GM12878 (cell line): ENCODE measurements at regions of chr4 and their contacts with region 1.

Region 1: DNA sequence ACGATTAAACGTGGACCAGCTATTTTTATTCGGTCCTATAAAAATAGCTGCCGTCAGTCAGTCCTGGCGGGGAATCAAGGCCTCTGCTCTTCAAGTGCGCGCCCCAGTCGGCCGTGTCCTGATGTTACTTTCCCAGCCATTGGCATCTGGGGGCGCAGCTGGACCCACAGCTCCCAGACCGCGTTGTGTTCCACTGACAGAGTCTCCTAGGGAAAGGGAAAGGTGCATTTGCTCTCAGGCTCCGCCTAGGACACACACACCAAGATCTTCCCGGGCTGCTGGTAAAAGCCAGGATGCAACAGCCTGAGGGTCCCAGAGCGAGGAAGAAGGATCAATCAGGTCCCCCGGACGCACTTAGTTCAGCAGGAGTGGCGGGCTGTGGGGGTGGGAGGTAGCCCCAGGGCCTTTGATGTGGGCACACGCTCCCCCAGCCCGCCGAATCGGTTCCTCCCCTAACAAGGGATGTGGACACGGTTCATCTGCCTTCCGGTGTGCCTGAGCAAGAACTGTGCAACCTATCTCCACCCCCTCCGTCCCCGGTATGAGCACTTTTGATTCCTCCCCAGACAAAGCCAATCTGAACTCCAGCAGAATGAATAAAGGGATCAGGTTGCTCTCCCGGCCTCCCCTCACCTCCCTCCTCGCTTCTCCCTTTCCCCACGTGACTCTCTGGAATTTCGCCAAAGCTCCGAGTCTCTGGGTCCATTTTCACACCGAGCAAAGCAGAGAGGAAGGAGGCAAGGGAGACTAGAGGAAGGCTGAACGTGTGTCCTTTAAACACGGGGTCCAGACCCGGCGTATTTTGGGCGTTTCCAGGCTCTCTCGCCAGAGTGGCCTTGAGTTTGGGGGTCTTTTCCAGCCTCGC is 626 bp upstream of the FRAS1 start:
- DNase-seq: no peak
- ATAC-seq: peak; percentile 82
- H3K4me3 ChIP-seq: peak overlapping the region; percentile 63
- H3K27ac ChIP-seq: no peak overlapping the region
- H3K4me1 ChIP-seq: peaks cover 12% of the 10 kb centered on the region; the same call in 1 of the 2 replicates
- H3K27me3 ChIP-seq: peaks cover 0 to 35% of the 10 kb centered on the region in 2 experiments; a peak in 3 of 4 replicates
- CTCF ChIP-seq: no peak
- EP300 ChIP-seq: no peak
- POLR2A ChIP-seq: no peak
- RAD21 ChIP-seq: no peak

Region 2: GRCh38 chr4:77327151-77327550 is 729.3 kb before region 1 on chr4:
- CTCF ChIA-PET with region 1: no interaction called
- POLR2A ChIA-PET with region 1: no interaction called
- RAD21 ChIA-PET with region 1: no interaction called
- SMC1A ChIA-PET with region 1: no interaction called
- in situ Hi-C with region 1: no loop called
- intact Hi-C with region 1: no loop called
- DNase-seq: no peak
- ATAC-seq: no peak
- H3K4me3 ChIP-seq: no peak overlapping the region
- H3K27ac ChIP-seq: no peak overlapping the region
- H3K4me1 ChIP-seq: no peaks in the 10 kb centered on the region
- H3K27me3 ChIP-seq: no peaks in the 10 kb centered on the region
- CTCF ChIP-seq: no peak
- EP300 ChIP-seq: no peak
- POLR2A ChIP-seq: no peak
- RAD21 ChIP-seq: no peak

Region 3: DNA sequence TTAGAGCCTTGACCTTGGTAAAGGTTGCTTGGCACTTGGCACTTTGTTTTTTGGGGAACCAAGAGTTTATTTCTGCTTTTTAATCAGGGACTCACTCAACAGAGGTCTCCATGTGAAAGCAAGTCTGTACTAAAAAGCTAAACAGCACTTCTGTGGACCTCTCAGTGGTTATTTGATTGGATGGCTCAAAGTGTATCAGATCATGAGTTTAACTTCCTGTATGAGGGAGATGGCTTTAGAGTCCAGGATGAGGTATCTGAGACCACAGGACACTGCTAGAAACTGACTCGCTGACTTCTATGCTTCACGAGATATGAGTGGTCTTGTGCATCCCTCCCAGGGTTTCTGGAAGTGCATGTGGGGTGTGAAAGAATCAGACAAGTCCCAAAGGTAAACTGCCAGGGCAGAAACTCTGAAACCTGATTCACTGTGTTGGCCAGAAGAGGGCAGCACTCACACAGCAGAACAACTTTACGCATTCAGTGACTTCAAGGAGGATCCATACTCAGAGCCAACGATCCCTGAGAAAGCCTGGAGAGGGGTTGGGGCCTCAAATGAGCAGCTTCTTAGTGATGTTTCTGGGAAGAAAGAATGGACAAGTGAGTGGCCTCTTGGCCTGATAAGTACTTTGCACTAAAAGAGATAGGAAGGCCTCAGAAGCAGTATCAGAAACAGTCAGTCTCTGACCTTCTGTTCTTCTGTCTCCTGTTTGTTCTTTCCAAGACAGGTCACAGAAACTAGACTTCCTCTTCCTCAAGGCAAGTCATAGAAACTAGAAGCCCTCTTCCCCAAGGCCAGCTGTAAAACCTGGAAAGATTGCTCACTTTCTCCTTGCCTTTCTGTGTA is 671.1 kb before region 1 on chr4:
- CTCF ChIA-PET with region 1: no interaction called
- POLR2A ChIA-PET with region 1: no interaction called
- RAD21 ChIA-PET with region 1: no interaction called
- SMC1A ChIA-PET with region 1: no interaction called
- in situ Hi-C with region 1: no loop called
- intact Hi-C with region 1: no loop called
- DNase-seq: peak; percentile 15
- ATAC-seq: peak; percentile 93
- H3K4me3 ChIP-seq: no peak overlapping the region
- H3K27ac ChIP-seq: no peak overlapping the region
- H3K4me1 ChIP-seq: no peaks in the 10 kb centered on the region
- H3K27me3 ChIP-seq: no peaks in the 10 kb centered on the region
- CTCF ChIP-seq: peak; percentile 84 to 85 (median 84)
- EP300 ChIP-seq: no peak
- POLR2A ChIP-seq: no peak
- RAD21 ChIP-seq: peak; percentile 89

Region 4: DNA sequence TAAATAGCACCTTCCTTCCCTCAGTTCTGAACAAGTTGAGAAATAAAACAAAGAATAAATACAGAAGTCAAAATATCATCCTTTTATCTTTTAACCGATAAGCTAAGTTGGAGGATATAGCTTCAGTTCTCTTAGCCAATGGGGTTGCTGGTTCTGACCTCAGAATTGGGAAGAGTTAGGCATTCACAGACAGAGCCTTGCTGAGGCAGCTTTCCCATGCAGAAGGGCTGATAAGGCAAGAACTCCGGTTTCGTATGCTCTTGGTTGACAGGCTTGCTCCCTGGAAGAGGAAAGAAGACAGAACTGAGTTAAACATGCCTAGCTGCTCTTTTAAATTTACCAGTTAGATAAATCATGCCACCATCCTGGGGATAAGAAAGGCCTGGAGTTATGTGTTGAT is 18.3 kb after region 1 on chr4:
- CTCF ChIA-PET with region 1: interaction called, 16 read pairs
- POLR2A ChIA-PET with region 1: interaction called, 5 read pairs
- RAD21 ChIA-PET with region 1: interaction called, 11 read pairs
- SMC1A ChIA-PET with region 1: interaction called, 3 read pairs
- in situ Hi-C with region 1: no loop called
- intact Hi-C with region 1: no loop called
- DNase-seq: no peak
- ATAC-seq: no peak
- H3K4me3 ChIP-seq: no peak overlapping the region
- H3K27ac ChIP-seq: no peak overlapping the region
- H3K4me1 ChIP-seq: no peaks in the 10 kb centered on the region
- H3K27me3 ChIP-seq: no peaks in the 10 kb centered on the region; a peak in 1 of 4 replicates
- CTCF ChIP-seq: no peak
- EP300 ChIP-seq: no peak
- POLR2A ChIP-seq: no peak
- RAD21 ChIP-seq: no peak

Region 5: GRCh38 chr4:78155616-78156105 is 99.2 kb after region 1 on chr4:
- CTCF ChIA-PET with region 1: interaction called, 4 read pairs
- POLR2A ChIA-PET with region 1: no interaction called
- RAD21 ChIA-PET with region 1: interaction called, 5 read pairs
- SMC1A ChIA-PET with region 1: interaction called, 14 read pairs
- in situ Hi-C with region 1: no loop called
- intact Hi-C with region 1: no loop called
- DNase-seq: no peak
- ATAC-seq: peak; percentile 62
- H3K4me3 ChIP-seq: no peak overlapping the region
- H3K27ac ChIP-seq: no peak overlapping the region
- H3K4me1 ChIP-seq: no peaks in the 10 kb centered on the region
- H3K27me3 ChIP-seq: peaks cover 0 to 4% of the 10 kb centered on the region in 2 experiments; a peak in 1 of 4 replicates
- CTCF ChIP-seq: no peak
- EP300 ChIP-seq: no peak
- POLR2A ChIP-seq: no peak
- RAD21 ChIP-seq: no peak

Region 6: DNA sequence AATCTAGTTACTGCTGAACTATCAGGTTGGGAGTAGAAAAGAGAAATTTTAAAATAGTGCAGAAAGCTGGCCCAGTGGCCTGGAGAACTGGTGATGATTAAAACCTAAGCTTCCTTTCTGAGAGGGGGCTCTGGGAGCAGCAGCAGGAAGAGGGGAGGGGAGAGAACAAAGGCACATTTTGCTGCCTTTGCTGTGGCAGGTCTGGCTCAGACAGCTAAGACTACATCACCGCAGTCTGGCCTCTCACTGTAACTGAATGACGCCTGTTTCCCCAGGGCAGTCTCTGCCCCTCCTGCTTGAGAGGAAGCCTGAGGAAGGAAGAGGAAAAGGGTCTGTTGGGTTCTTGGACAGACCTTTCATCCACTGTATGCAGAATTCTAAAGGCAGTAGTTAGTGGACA is 149.1 kb after region 1 on chr4:
- CTCF ChIA-PET with region 1: interaction called, 4 read pairs
- POLR2A ChIA-PET with region 1: no interaction called
- RAD21 ChIA-PET with region 1: interaction called, 16 read pairs
- SMC1A ChIA-PET with region 1: interaction called, 7 read pairs
- in situ Hi-C with region 1: no loop called
- intact Hi-C with region 1: no loop called
- DNase-seq: no peak
- ATAC-seq: peak; percentile 28
- H3K4me3 ChIP-seq: no peak overlapping the region
- H3K27ac ChIP-seq: no peak overlapping the region
- H3K4me1 ChIP-seq: no peaks in the 10 kb centered on the region
- H3K27me3 ChIP-seq: no peaks in the 10 kb centered on the region
- CTCF ChIP-seq: no peak
- EP300 ChIP-seq: no peak
- POLR2A ChIP-seq: no peak
- RAD21 ChIP-seq: no peak

Region 7: DNA sequence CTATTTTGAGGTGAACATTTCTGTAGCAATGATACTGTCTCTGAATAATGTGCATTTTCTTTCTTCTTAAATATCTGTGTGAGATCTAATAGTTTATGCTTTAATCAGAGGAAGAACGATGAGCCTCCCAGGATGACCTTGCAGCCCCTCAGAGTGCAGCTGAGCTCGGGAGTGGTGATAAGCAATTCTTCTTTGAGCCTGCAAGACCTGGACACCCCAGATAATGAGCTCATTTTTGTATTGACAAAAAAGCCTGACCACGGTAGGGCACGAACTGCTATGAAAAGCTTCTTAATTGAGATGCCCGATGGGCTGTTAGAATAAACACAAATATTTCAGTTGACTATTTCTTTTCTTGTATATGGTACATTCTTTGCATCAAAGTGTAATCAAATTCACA is 390.1 kb after region 1 on chr4:
- CTCF ChIA-PET with region 1: interaction called, 4 read pairs
- POLR2A ChIA-PET with region 1: no interaction called
- RAD21 ChIA-PET with region 1: interaction called, 11 read pairs
- SMC1A ChIA-PET with region 1: interaction called, 4 read pairs
- in situ Hi-C with region 1: no loop called
- intact Hi-C with region 1: no loop called
- DNase-seq: no peak
- ATAC-seq: no peak
- H3K4me3 ChIP-seq: no peak overlapping the region
- H3K27ac ChIP-seq: no peak overlapping the region
- H3K4me1 ChIP-seq: no peaks in the 10 kb centered on the region
- H3K27me3 ChIP-seq: no peaks in the 10 kb centered on the region
- CTCF ChIP-seq: no peak
- EP300 ChIP-seq: no peak
- POLR2A ChIP-seq: no peak
- RAD21 ChIP-seq: no peak

Region 8: GRCh38 chr4:78601013-78601412 is 544.5 kb after region 1 on chr4:
- CTCF ChIA-PET with region 1: interaction called, 17 read pairs
- POLR2A ChIA-PET with region 1: no interaction called
- RAD21 ChIA-PET with region 1: interaction called, 5 read pairs
- SMC1A ChIA-PET with region 1: interaction called, 4 read pairs
- in situ Hi-C with region 1: no loop called
- intact Hi-C with region 1: loop called (anchors 10 kb)
- DNase-seq: peak; percentile 63
- ATAC-seq: peak; percentile 92
- H3K4me3 ChIP-seq: no peak overlapping the region
- H3K27ac ChIP-seq: no peak overlapping the region
- H3K4me1 ChIP-seq: no peaks in the 10 kb centered on the region
- H3K27me3 ChIP-seq: no peaks in the 10 kb centered on the region
- CTCF ChIP-seq: peak in 1 of 3 experiments; percentile 16; a peak in 1 of 6 replicates
- EP300 ChIP-seq: peak; percentile 44 to 83; a peak in 3 of 4 replicates
- POLR2A ChIP-seq: no peak
- RAD21 ChIP-seq: no peak